Heart left ventricle (tissue), 16 donors: ENCODE measurements at regions of chr2 and their contacts with region 1.

Region 1: DNA sequence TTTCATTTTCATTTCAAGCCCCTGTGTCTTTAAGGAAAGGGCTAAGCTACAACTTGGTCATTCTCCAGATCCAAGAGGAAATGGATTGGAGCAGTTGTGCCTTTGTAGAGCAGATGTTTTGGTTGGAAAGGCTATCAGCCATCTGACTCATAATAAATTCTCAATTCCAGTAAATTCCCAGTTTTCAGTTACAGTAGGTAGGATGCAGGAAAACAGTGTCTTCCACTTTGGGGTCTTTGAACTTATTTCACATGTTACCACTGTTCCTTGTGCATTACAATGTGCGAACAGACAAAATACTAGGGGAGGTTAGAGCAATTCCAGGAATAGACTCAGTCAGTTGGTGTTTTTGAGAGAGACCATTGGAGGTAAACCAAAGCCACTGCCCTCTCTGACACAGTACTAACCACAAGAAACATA is 211.9 kb downstream of the BABAM2 start:
- DNase-seq: peak in 2 of 5 donors; percentile 20 to 25
- ATAC-seq: peak; percentile 77 to 89 (median 87)
- H3K4me3 ChIP-seq: peak overlapping the region in 8 of 12 donors; percentile 3 to 40 (median 26)
- H3K27ac ChIP-seq: peak overlapping the region; percentile 43 to 90 (median 76)
- H3K4me1 ChIP-seq: peaks cover 0 to 38% (median 24%) of the 10 kb centered on the region in 12 donors
- H3K27me3 ChIP-seq: no peaks in the 10 kb centered on the region
- CTCF ChIP-seq: no peak
- POLR2A ChIP-seq: no peak

Region 2: GRCh38 chr2:28068088-28068487 is 34.4 kb before region 1 on chr2:
- intact Hi-C with region 1: no loop called
- DNase-seq: no peak
- ATAC-seq: no peak
- H3K4me3 ChIP-seq: no peak overlapping the region
- H3K27ac ChIP-seq: no peak overlapping the region
- H3K4me1 ChIP-seq: no peaks in the 10 kb centered on the region
- H3K27me3 ChIP-seq: no peaks in the 10 kb centered on the region
- CTCF ChIP-seq: no peak
- POLR2A ChIP-seq: no peak

Region 3: DNA sequence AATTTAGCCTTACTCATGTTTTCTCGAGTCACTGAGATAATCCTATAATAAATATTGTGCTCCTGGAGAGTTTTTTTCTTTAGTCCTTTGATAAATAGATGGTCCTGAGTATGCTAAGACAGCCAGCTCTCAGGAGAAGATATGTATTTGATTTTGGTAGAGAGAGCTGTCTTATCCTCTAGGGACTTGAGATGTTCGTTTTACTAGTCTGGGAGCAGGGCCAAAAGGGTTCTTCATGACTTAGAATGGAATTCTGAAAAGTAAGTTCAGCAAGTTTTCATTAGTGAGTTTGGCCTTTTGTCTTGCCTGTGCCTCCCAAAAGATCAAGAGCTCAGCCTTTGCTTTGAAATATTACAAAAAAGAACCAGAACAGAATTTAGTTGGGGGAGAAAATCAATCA is 34.8 kb after region 1 on chr2:
- intact Hi-C with region 1: loop called in 1 of 10 experiments (anchors 5 kb)
- DNase-seq: peak in 3 of 5 donors; percentile 28 to 49 (median 37)
- ATAC-seq: peak in 2 of 4 donors; percentile 27 to 51
- H3K4me3 ChIP-seq: no peak overlapping the region
- H3K27ac ChIP-seq: peak overlapping the region in 4 of 12 donors; percentile 14 to 59 (median 40)
- H3K4me1 ChIP-seq: peaks cover 0 to 39% (median 18%) of the 10 kb centered on the region in 12 donors
- H3K27me3 ChIP-seq: no peaks in the 10 kb centered on the region
- CTCF ChIP-seq: no peak
- POLR2A ChIP-seq: no peak

Region 4: GRCh38 chr2:28209261-28209691 is 106.8 kb after region 1 on chr2:
- intact Hi-C with region 1: no loop called
- DNase-seq: no peak
- ATAC-seq: no peak
- H3K4me3 ChIP-seq: no peak overlapping the region
- H3K27ac ChIP-seq: no peak overlapping the region
- H3K4me1 ChIP-seq: peaks cover 0 to 3% (median 0%) of the 10 kb centered on the region in 12 donors
- H3K27me3 ChIP-seq: no peaks in the 10 kb centered on the region
- CTCF ChIP-seq: no peak
- POLR2A ChIP-seq: no peak

Region 5: GRCh38 chr2:28338046-28338817 is 235.8 kb after region 1 on chr2:
- intact Hi-C with region 1: loop called in 1 of 10 experiments (anchors 10 kb)
- DNase-seq: peak in 4 of 5 donors; percentile 46 to 82 (median 68)
- ATAC-seq: peak in 3 of 4 donors; percentile 8 to 48 (median 40)
- H3K4me3 ChIP-seq: no peak overlapping the region
- H3K27ac ChIP-seq: peak overlapping the region in 11 of 12 donors; percentile 10 to 65 (median 47)
- H3K4me1 ChIP-seq: peaks cover 0 to 71% (median 54%) of the 10 kb centered on the region in 12 donors
- H3K27me3 ChIP-seq: no peaks in the 10 kb centered on the region
- CTCF ChIP-seq: no peak
- POLR2A ChIP-seq: no peak